ENCODE measurements at regions of chr10 and their contacts with region 1.

Region 1: DNA sequence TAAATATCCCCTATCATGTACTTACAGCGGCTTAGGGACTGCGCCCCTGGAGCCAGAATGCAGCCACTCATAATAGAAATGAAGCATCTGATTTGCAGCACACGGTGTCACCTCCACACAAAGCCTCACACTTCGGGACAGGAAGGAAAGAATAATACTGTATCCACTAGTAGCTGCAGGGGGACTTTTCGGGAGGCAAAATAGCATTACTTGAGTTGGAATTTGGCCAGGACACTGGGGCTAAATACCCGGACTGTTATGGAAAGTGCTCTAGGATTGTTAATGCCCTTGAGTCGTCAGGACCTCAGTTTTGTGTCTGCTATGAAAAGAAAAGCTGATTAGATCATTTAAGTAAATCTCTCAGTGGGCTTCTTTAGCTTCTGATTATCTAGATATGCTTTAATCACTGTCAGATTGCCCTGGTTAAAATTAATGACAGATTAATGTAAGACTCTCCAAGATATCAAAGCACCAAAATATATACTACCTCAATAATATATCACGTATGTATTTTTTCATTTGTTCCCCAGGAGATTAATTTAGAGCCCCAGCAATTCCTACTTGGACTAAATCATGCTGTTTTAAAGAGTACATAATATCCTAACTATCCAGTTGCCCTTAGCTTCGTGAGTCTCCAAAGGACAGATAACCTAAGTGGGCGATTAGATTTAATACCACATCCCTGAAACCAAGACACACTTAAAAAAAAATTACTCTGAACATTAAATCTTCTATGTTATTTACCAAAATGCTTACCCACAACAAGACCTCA is 173.0 kb upstream of the NEBL start:
- DNase-seq: peak in 1 of 5 donors; percentile 35
- ATAC-seq: peak; percentile 54 to 67 (median 60)
- H3K4me3 ChIP-seq: peak overlapping the region in 1 of 12 donors; percentile 7
- H3K27ac ChIP-seq: peak overlapping the region in 8 of 12 donors; percentile 1 to 64 (median 48)
- H3K4me1 ChIP-seq: peaks cover 0 to 34% (median 10%) of the 10 kb centered on the region in 12 donors
- H3K27me3 ChIP-seq: no peaks in the 10 kb centered on the region
- CTCF ChIP-seq: no peak
- POLR2A ChIP-seq: no peak

Region 2: DNA sequence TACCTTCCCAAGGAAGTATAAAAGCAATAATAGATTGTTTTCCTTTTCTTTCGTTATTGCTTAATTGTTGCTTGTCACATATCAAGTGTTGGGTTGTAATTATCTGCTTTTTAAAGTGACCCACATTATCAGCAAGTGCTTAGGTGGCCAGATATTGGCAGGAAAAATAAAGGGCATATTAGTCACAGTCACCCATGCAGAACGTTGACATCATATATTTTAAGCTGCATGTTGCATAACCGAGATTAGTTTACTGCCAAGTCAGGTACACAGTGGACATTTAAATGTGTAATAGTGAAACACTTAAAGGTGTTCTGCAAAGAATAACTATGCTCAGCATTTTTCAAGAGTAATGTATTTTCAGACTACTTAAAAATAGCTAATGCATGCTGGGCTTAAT is 184.4 kb before region 1 on chr10:
- intact Hi-C with region 1: loop called in 6 of 10 experiments (anchors 5 to 10 kb)
- DNase-seq: no peak
- ATAC-seq: peak; percentile 74 to 83 (median 83)
- H3K4me3 ChIP-seq: peak overlapping the region in 3 of 12 donors; percentile 2 to 21 (median 8)
- H3K27ac ChIP-seq: peak overlapping the region in 10 of 12 donors; percentile 48 to 76 (median 58)
- H3K4me1 ChIP-seq: peaks cover 0 to 33% (median 1%) of the 10 kb centered on the region in 12 donors
- H3K27me3 ChIP-seq: no peaks in the 10 kb centered on the region
- CTCF ChIP-seq: no peak
- POLR2A ChIP-seq: no peak

Region 3: GRCh38 chr10:20891338-20891714 is 178.8 kb before region 1 on chr10:
- intact Hi-C with region 1: loop called in 8 of 10 experiments (anchors 5 to 10 kb)
- DNase-seq: no peak
- ATAC-seq: peak; percentile 39 to 56 (median 48)
- H3K4me3 ChIP-seq: peak overlapping the region in 10 of 12 donors; percentile 6 to 67 (median 46)
- H3K27ac ChIP-seq: peak overlapping the region in 11 of 12 donors; percentile 35 to 95 (median 84)
- H3K4me1 ChIP-seq: peaks cover 0 to 19% (median 0%) of the 10 kb centered on the region in 12 donors
- H3K27me3 ChIP-seq: no peaks in the 10 kb centered on the region
- CTCF ChIP-seq: no peak
- POLR2A ChIP-seq: no peak

Region 4: DNA sequence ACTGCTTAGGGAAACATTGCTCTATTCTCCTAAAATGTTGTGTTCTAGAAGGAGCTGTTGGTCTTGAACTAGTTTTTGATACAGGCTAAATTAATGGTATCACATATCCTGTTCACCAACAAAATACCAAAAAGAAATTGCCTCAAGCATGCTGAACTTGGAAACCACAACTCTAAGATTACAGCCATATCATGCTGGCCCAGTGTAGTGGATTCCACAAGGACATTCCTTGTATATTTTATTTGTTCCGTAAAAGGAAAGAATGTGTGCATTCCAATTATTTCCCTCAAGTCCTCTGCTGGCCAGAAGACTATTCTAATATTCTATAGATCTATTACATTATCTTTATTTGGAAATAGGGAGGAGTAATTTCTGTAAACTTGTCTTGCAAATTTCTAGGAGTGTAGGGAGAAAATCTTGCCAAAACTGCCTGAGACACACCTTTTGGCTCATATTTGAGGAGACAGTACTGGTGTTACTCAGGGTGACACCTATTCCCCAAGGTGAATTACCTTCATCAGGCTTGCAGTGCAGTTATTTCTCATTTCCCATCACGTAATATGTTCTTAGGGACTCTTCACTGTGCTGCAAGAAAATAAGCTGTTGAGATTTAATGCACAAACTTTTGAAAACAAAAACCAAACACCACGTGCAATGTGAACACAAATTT is 171.1 kb before region 1 on chr10:
- intact Hi-C with region 1: loop called in 5 of 10 experiments (anchors 5 to 10 kb)
- DNase-seq: no peak
- ATAC-seq: no peak
- H3K4me3 ChIP-seq: no peak overlapping the region
- H3K27ac ChIP-seq: peak overlapping the region in 8 of 12 donors; percentile 18 to 95 (median 90)
- H3K4me1 ChIP-seq: peaks cover 0 to 12% (median 0%) of the 10 kb centered on the region in 12 donors
- H3K27me3 ChIP-seq: no peaks in the 10 kb centered on the region
- CTCF ChIP-seq: no peak
- POLR2A ChIP-seq: no peak

Region 5: DNA sequence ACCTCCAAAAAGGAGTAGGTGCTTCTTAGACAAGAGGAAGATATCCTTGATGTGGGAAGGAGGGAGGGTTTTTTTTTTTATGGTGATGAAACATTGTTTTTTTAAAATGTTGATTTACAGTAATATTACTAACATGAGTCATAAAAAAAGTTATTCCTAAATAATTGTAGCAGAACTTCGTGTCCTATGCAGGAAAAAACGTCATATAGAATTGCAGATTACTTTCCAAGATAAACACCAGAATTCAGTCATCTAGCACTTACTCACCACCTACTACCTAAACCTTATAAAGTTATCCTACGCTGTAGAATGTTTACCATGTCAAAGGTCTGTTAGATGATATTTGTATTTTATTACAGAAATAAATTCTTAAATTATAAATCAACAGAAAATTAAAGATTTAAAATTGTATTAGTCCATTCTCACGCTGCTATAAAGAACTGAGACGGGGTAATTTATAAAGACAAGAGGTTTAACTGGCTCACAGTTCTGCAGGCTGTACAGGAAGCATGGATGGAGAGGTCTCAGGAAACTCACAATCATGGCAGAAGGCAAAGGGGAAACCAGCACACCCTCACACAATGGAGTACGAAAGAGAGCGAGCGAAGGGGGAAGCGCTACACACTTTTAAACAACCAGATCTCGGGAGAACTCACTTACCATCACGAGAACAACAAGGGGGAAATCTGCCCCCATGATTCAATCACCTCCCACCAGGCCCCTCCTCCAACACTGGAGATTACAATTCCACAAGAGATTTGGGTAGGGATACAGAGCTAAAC is 67.8 kb before region 1 on chr10:
- intact Hi-C with region 1: loop called in 1 of 10 experiments (anchors 10 kb)
- DNase-seq: no peak
- ATAC-seq: no peak
- H3K4me3 ChIP-seq: no peak overlapping the region
- H3K27ac ChIP-seq: no peak overlapping the region
- H3K4me1 ChIP-seq: peaks cover 0 to 13% (median 2%) of the 10 kb centered on the region in 12 donors
- H3K27me3 ChIP-seq: no peaks in the 10 kb centered on the region
- CTCF ChIP-seq: no peak
- POLR2A ChIP-seq: no peak

Region 6: GRCh38 chr10:22110761-22111160 is 1040.6 kb after region 1 on chr10:
- intact Hi-C with region 1: no loop called
- DNase-seq: no peak
- ATAC-seq: no peak
- H3K4me3 ChIP-seq: no peak overlapping the region
- H3K27ac ChIP-seq: no peak overlapping the region
- H3K4me1 ChIP-seq: no peaks in the 10 kb centered on the region
- H3K27me3 ChIP-seq: peaks cover 0 to 7% (median 0%) of the 10 kb centered on the region in 9 donors
- CTCF ChIP-seq: no peak
- POLR2A ChIP-seq: no peak